ENCODE measurements at regions of chr2 and their contacts with region 1.

Region 1: GRCh38 chr2:120722568-120723421 is 12.9 kb upstream of the GLI2 start:
- DNase-seq: no peak
- ATAC-seq: peak; percentile 30 to 36
- H3K4me3 ChIP-seq: no peak overlapping the region
- H3K27ac ChIP-seq: no peak overlapping the region
- H3K4me1 ChIP-seq: peaks cover 0 to 5% of the 10 kb centered on the region in 2 donors
- H3K27me3 ChIP-seq: no peaks in the 10 kb centered on the region
- CTCF ChIP-seq: no peak
- POLR2A ChIP-seq: no peak

Region 2: DNA sequence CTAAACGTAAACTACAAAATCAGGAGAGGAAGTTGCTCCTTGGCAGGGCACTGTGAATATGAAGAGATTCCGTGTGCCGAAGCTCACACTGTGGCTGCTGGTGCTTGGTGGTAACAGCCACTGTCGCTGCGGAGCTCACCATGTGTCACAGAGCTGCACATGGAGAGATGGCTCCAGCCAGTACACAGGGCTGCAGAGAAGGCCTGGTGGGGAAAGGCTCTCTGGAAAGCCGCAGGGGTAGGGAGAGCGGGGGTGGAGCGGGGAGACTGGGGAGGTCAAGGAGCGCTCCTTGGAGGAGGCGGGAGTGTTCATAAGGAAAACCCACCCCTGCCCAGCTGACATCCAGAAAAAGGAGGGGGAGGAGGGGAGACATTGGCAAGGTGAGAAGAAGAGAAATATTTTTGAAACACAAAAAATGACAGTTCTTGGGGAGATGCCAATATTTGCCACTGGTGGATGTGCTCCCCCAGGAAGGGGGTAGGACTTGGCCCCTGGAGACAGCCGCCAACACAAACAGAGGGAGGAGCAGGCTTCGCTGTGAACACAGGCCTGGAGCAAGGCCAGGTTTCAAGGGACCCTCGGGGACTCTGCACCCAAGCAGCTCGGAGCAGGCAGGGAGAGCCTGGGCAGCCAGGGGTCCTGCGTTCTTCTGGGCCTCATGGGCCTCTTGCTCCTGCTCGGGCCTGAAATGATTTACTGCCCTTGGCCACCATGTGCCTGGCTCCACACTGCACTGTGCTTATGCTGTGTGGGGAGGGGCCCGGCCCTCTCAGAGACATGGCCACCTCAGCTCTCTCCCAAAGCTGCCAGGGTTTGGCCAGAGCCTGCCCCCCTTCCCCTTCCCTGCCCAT is 89.8 kb before region 1 on chr2:
- in situ Hi-C with region 1: no loop called
- intact Hi-C with region 1: no loop called
- DNase-seq: no peak
- ATAC-seq: no peak
- H3K4me3 ChIP-seq: no peak overlapping the region
- H3K27ac ChIP-seq: no peak overlapping the region
- H3K4me1 ChIP-seq: no peaks in the 10 kb centered on the region
- H3K27me3 ChIP-seq: no peaks in the 10 kb centered on the region
- CTCF ChIP-seq: no peak
- POLR2A ChIP-seq: no peak

Region 3: GRCh38 chr2:121309801-121310200 is 587.0 kb after region 1 on chr2:
- in situ Hi-C with region 1: loop called in 1 of 4 experiments (anchors 25 kb)
- intact Hi-C with region 1: no loop called
- DNase-seq: no peak
- ATAC-seq: no peak
- H3K4me3 ChIP-seq: no peak overlapping the region
- H3K27ac ChIP-seq: no peak overlapping the region
- H3K4me1 ChIP-seq: no peaks in the 10 kb centered on the region
- H3K27me3 ChIP-seq: no peaks in the 10 kb centered on the region
- CTCF ChIP-seq: no peak
- POLR2A ChIP-seq: no peak

Region 4: GRCh38 chr2:121333834-121334558 is 611.2 kb after region 1 on chr2:
- in situ Hi-C with region 1: loop called in 1 of 4 experiments (anchors 25 kb)
- intact Hi-C with region 1: no loop called
- DNase-seq: no peak
- ATAC-seq: peak in 1 of 2 donors; percentile 5
- H3K4me3 ChIP-seq: no peak overlapping the region
- H3K27ac ChIP-seq: peak overlapping the region in 2 of 4 donors; percentile 64 to 68
- H3K4me1 ChIP-seq: peaks cover 3 to 24% of the 10 kb centered on the region in 2 donors
- H3K27me3 ChIP-seq: no peaks in the 10 kb centered on the region
- CTCF ChIP-seq: no peak
- POLR2A ChIP-seq: no peak